ENCODE measurements at regions of chr10 and their contacts with region 1.

Region 1: GRCh38 chr10:121088524-121088923 is 237.4 kb downstream of the WDR11 start:
- DNase-seq: peak; percentile 36
- H3K4me3 Mint-ChIP-seq: no peak overlapping the region
- H3K27ac Mint-ChIP-seq: no peak overlapping the region
- H3K4me1 Mint-ChIP-seq: peaks cover 21% of the 10 kb centered on the region
- H3K27me3 Mint-ChIP-seq: no peaks in the 10 kb centered on the region
- CTCF ChIP-seq: peak; percentile 25

Region 2: DNA sequence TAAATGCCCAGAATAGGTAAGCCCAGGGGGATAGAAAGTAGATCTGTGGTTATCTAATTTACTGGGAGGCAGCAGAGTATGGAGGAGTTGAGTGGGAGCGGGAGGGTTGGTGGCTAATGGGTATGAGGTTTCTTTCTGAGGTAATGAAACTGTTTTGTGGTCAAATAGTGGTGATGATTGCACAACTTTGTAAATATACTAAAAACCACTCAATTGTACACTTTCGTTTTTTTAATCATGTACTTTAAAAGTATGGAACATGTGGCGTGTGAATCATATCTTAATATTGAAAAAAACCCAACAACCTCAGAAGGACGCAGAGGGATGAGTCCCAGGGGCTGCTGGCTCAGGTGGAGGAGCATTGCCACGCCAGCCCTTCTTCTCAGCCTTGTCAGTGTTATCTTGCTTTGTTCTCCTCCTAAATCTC is 119.3 kb before region 1 on chr10:
- CTCF ChIA-PET with region 1: no interaction called
- POLR2A ChIA-PET with region 1: no interaction called
- intact Hi-C with region 1: no loop called
- DNase-seq: peak; percentile 41
- H3K4me3 Mint-ChIP-seq: no peak overlapping the region
- H3K27ac Mint-ChIP-seq: no peak overlapping the region
- H3K4me1 Mint-ChIP-seq: peaks cover 15% of the 10 kb centered on the region
- H3K27me3 Mint-ChIP-seq: peaks cover 44% of the 10 kb centered on the region
- CTCF ChIP-seq: no peak

Region 3: DNA sequence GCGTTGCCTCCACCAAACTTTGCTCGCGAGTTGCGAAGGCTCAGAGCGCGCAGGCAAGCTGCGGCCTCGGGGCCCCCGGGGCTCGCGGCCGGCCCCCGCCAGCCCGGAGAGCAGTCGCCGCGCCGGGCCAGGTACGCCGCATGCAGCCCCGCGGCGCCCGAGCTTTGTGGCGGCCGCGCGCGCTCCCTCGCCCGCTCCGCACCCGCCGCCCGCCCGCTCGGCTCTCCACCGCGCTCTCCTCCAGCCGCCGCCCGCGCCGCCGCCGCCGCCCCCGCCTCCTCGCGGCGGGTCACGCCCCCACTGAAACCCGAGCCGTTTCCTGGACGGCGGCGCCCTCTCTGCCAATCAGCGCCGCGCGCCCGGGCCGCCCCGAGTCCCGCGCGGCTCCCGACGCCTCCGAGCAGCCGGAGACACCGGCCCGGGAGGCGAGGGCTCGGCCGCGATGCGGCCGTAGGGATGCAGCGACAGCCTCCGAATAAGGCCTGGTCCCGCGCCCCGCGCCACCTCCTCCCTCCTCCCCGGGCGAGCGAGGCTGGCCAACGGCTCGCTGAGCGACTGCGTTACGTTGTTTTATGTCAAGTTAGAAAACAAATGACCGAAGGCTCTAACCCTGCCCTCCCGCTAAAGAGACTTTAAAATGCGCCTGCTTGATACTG is 509.8 kb after region 1 on chr10 and contains the start of gene FGFR2:
- CTCF ChIA-PET with region 1: interaction called, 4 read pairs
- POLR2A ChIA-PET with region 1: no interaction called
- intact Hi-C with region 1: loop called (anchors 5 kb)
- DNase-seq: peak; percentile 86
- H3K4me3 Mint-ChIP-seq: peak within 1 kb of the TSS; percentile 76
- H3K27ac Mint-ChIP-seq: no peak within 1 kb of the TSS
- H3K4me1 Mint-ChIP-seq: peaks cover 5% of the 10 kb centered on the region
- H3K27me3 Mint-ChIP-seq: no peaks in the 10 kb centered on the region
- CTCF ChIP-seq: no peak
- total RNA-seq, gene FGFR2: 2.7 and 3.0 TPM in 2 replicates